ENCODE measurements at regions of chr9 and their contacts with region 1.

Region 1: DNA sequence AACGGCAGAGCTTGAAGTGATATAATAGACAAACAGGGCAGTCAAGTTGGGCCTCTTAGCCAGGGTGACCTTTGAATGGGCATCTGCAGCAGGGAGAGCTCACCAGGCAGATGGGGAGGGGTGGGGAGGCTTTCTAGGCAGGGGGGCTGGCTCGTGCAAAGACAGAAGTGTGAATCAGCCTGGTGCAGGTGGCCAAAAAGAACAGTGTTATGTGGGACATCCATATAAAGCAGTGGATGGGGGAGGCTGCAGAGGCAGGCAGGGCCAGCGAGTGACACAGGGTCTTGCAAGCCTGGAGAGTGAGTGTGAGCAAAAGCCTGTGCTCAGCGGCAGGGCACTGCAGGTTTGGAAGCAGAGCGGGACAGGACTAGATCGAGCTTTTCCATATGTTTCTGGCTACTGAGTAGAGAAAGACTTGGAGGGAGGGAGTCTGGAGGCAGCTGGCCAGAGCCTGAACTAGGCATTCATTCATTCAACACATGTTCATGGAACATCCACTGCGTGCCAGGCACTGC is 14.2 kb upstream of the TTLL11 start:
- DNase-seq: no peak
- H3K4me3 Mint-ChIP-seq: no peak overlapping the region
- H3K27ac Mint-ChIP-seq: no peak overlapping the region
- H3K4me1 Mint-ChIP-seq: no peaks in the 10 kb centered on the region
- H3K27me3 Mint-ChIP-seq: peaks cover under 1% of the 10 kb centered on the region
- CTCF ChIP-seq: no peak

Region 2: GRCh38 chr9:122005597-122005996 is 101.8 kb before region 1 on chr9:
- CTCF ChIA-PET with region 1: no interaction called
- POLR2A ChIA-PET with region 1: no interaction called
- intact Hi-C with region 1: no loop called
- DNase-seq: peak; percentile 60
- H3K4me3 Mint-ChIP-seq: no peak overlapping the region
- H3K27ac Mint-ChIP-seq: no peak overlapping the region
- H3K4me1 Mint-ChIP-seq: no peaks in the 10 kb centered on the region
- H3K27me3 Mint-ChIP-seq: no peaks in the 10 kb centered on the region
- CTCF ChIP-seq: peak; percentile 42

Region 3: GRCh38 chr9:122092611-122093506 is 14.5 kb before region 1 on chr9 and contains the start of gene TTLL11:
- CTCF ChIA-PET with region 1: interaction called, 39 read pairs
- POLR2A ChIA-PET with region 1: no interaction called
- intact Hi-C with region 1: no loop called
- DNase-seq: peak; percentile 95
- H3K4me3 Mint-ChIP-seq: peak within 1 kb of the TSS; percentile 91
- H3K27ac Mint-ChIP-seq: peak within 1 kb of the TSS; percentile 57
- H3K4me1 Mint-ChIP-seq: peaks cover 33% of the 10 kb centered on the region
- H3K27me3 Mint-ChIP-seq: no peaks in the 10 kb centered on the region
- CTCF ChIP-seq: no peak
- total RNA-seq, gene TTLL11: 9.0 and 13.6 TPM in 2 replicates

Region 4: DNA sequence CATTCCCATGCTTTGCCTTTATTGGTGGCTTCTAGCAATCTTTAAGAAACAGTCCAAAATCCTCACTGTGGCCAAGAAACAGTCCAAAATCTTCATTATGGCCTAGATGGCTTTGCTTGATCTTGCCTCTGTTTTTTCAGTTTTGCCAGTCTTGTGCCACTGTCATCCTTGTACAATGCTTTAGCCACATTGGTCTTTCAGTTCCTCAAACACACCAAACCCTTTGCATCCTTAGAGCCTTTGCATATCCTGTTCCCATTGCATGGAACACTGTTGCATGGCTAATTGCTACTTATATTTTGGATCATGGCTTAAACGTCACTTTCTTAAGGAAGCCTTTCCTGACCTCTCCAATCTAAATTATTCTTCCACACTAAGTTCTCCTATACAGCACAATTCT is 179.4 kb after region 1 on chr9:
- CTCF ChIA-PET with region 1: no interaction called
- POLR2A ChIA-PET with region 1: no interaction called
- intact Hi-C with region 1: no loop called
- DNase-seq: no peak
- H3K4me3 Mint-ChIP-seq: no peak overlapping the region
- H3K27ac Mint-ChIP-seq: no peak overlapping the region
- H3K4me1 Mint-ChIP-seq: no peaks in the 10 kb centered on the region
- H3K27me3 Mint-ChIP-seq: no peaks in the 10 kb centered on the region
- CTCF ChIP-seq: no peak